HepG2 (cell line): ENCODE measurements at regions of chr13 and their contacts with region 1.

Region 1: GRCh38 chr13:78121459-78122348 is 203.1 kb upstream of the EDNRB start:
- DNase-seq: peak; percentile 37
- ATAC-seq: peak; percentile 35; the same call in 1 of the 3 replicates
- H3K4me3 ChIP-seq: no peak overlapping the region
- H3K27ac ChIP-seq: no peak overlapping the region
- H3K4me1 ChIP-seq: no peaks in the 10 kb centered on the region
- H3K27me3 ChIP-seq: no peaks in the 10 kb centered on the region
- CTCF ChIP-seq: peak; percentile 70
- EP300 ChIP-seq: no peak
- POLR2A ChIP-seq: no peak
- RAD21 ChIP-seq: no peak

Region 2: GRCh38 chr13:77620138-77620537 is 501.6 kb before region 1 on chr13:
- CTCF ChIA-PET with region 1: no interaction called
- POLR2A ChIA-PET with region 1: no interaction called
- in situ Hi-C with region 1: loop called (anchors 25 kb)
- intact Hi-C with region 1: no loop called
- DNase-seq: no peak
- ATAC-seq: no peak
- H3K4me3 ChIP-seq: no peak overlapping the region
- H3K27ac ChIP-seq: no peak overlapping the region
- H3K4me1 ChIP-seq: no peaks in the 10 kb centered on the region
- H3K27me3 ChIP-seq: no peaks in the 10 kb centered on the region
- CTCF ChIP-seq: no peak
- EP300 ChIP-seq: no peak
- POLR2A ChIP-seq: no peak
- RAD21 ChIP-seq: no peak

Region 3: DNA sequence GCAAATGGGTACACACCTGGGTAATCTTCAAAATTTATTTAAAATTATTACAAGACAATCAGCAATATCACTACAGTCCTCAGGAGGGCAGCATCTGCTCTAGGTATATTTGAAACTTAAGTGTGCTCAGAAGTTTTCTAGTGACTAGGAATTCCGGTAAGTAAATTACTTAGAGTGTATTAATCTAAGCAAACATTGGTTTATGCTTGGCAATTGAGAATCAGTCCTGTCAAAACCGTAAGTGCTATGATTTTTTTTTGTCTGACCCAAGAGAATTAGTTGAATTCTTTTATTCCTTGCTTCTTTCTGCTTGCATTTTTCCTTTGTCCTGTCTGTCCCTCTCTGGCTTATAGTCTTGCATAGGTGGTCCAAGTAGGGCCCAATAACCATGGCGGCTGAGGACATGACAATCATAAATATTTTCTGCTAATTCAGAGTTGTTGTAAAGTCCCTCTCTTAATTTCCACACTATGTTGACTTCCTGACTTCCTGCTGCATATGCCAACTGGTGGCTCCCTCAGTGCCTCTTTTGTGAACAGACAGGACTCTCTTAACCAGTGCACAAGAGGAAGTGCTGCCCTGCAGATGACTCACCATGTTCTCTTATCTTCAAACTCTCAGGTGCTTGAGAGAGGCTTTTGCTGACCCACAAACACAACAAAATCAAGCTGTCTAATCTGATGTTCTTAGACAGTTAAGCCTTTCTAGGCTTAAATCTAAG is 342.0 kb before region 1 on chr13:
- CTCF ChIA-PET with region 1: interaction called, 24 read pairs
- POLR2A ChIA-PET with region 1: no interaction called
- in situ Hi-C with region 1: loop called (anchors 5 kb)
- intact Hi-C with region 1: no loop called
- DNase-seq: peak; percentile 26
- ATAC-seq: peak; percentile 71
- H3K4me3 ChIP-seq: no peak overlapping the region
- H3K27ac ChIP-seq: no peak overlapping the region
- H3K4me1 ChIP-seq: no peaks in the 10 kb centered on the region
- H3K27me3 ChIP-seq: no peaks in the 10 kb centered on the region
- CTCF ChIP-seq: peak; percentile 45
- EP300 ChIP-seq: no peak
- POLR2A ChIP-seq: no peak
- RAD21 ChIP-seq: no peak

Region 4: DNA sequence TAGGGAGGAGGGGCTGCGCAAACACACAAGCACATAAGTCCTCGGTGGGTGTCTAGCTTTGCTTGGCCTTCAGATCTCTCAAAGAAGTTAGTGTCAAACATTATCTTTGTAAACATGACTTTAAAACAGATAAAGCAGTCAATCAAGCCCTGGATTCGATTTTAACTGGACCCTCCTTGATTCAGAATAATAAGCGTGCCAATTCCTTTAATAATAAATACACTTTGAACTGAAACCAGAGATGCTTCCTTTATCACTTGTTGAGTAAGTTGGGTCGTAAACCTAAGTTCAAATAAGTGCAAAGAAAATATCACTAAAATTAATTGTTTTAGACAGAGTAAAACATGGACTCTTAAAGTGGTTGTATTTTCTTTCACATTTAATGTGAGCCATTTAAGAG is 450.8 kb after region 1 on chr13:
- CTCF ChIA-PET with region 1: no interaction called
- POLR2A ChIA-PET with region 1: no interaction called
- in situ Hi-C with region 1: no loop called
- intact Hi-C with region 1: no loop called
- DNase-seq: no peak
- ATAC-seq: no peak
- H3K4me3 ChIP-seq: no peak overlapping the region
- H3K27ac ChIP-seq: no peak overlapping the region
- H3K4me1 ChIP-seq: no peaks in the 10 kb centered on the region
- H3K27me3 ChIP-seq: no peaks in the 10 kb centered on the region
- CTCF ChIP-seq: no peak
- EP300 ChIP-seq: no peak
- POLR2A ChIP-seq: no peak
- RAD21 ChIP-seq: no peak